Caco-2 (cell line): ENCODE measurements at regions of chr1 and their contacts with region 1.

Region 1: DNA sequence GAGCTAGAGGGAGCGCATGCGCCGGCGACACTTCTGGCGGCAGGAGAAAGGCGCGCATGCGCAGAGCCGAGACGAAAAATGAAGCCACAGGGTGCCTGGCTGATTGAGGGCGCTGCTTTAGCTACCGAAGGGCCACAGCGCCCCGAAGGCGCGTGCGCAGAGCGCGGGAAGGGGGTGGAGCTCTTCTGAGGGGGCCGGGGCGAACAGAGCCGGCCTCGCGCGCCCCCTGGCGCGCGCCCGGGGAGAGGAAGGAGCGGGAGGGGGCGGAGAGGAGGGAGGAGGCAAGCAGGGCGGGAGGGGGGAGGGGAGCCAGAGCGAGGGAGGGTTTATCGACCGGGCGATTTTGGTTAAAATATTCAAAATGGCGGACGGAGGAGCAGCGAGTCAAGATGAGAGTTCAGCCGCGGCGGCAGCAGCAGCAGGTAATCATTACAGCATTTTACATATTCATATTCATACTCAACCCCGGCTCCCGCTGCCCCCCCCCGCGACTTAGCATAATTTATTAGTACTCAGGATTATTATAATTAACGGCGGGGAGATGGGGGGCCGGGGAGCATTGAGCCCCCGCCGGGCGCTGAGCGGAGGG is at the start of gene POU2F1:
- DNase-seq: peak; percentile 97
- H3K4me3 ChIP-seq: peak within 1 kb of the TSS; percentile 85
- H3K4me3 Mint-ChIP-seq: peak within 1 kb of the TSS; percentile 83
- H3K27ac Mint-ChIP-seq: peak within 1 kb of the TSS; percentile 87
- H3K4me1 ChIP-seq: peaks cover 16% of the 10 kb centered on the region; the same call in 1 of the 2 replicates
- H3K4me1 Mint-ChIP-seq: peaks cover 14% of the 10 kb centered on the region
- H3K27me3 ChIP-seq: no peaks in the 10 kb centered on the region
- H3K27me3 Mint-ChIP-seq: no peaks in the 10 kb centered on the region
- CTCF ChIP-seq: peak; percentile 36 to 87
- total RNA-seq, gene POU2F1: 28.3 and 29.6 TPM in 2 replicates

Region 2: GRCh38 chr1:166910396-166910994 is 310.1 kb before region 1 on chr1:
- CTCF ChIA-PET with region 1: interaction called, 13 read pairs
- POLR2A ChIA-PET with region 1: no interaction called
- intact Hi-C with region 1: loop called (anchors 2 kb)
- DNase-seq: peak; percentile 77 to 79
- H3K4me3 ChIP-seq: no peak overlapping the region
- H3K4me3 Mint-ChIP-seq: no peak overlapping the region
- H3K27ac Mint-ChIP-seq: no peak overlapping the region
- H3K4me1 ChIP-seq: no peaks in the 10 kb centered on the region
- H3K4me1 Mint-ChIP-seq: no peaks in the 10 kb centered on the region
- H3K27me3 ChIP-seq: no peaks in the 10 kb centered on the region
- H3K27me3 Mint-ChIP-seq: peaks cover 10% of the 10 kb centered on the region
- CTCF ChIP-seq: peak; percentile 80 to 85

Region 3: GRCh38 chr1:167082511-167083027 is 138.1 kb before region 1 on chr1:
- CTCF ChIA-PET with region 1: interaction called, 7 read pairs
- POLR2A ChIA-PET with region 1: interaction called, 17 read pairs
- intact Hi-C with region 1: loop called (anchors 1 kb)
- DNase-seq: peak; percentile 66 to 88
- H3K4me3 ChIP-seq: no peak overlapping the region
- H3K4me3 Mint-ChIP-seq: no peak overlapping the region
- H3K27ac Mint-ChIP-seq: no peak overlapping the region
- H3K4me1 ChIP-seq: peaks cover 28% of the 10 kb centered on the region
- H3K4me1 Mint-ChIP-seq: no peaks in the 10 kb centered on the region
- H3K27me3 ChIP-seq: no peaks in the 10 kb centered on the region
- H3K27me3 Mint-ChIP-seq: no peaks in the 10 kb centered on the region
- CTCF ChIP-seq: no peak

Region 4: GRCh38 chr1:167165948-167166689 is 54.5 kb before region 1 on chr1:
- CTCF ChIA-PET with region 1: interaction called, 13 read pairs
- POLR2A ChIA-PET with region 1: interaction called, 8 read pairs
- intact Hi-C with region 1: loop called (anchors 1 kb)
- DNase-seq: peak; percentile 55 to 79
- H3K4me3 ChIP-seq: no peak overlapping the region
- H3K4me3 Mint-ChIP-seq: peak overlapping the region; percentile 5
- H3K27ac Mint-ChIP-seq: peak overlapping the region; percentile 26
- H3K4me1 ChIP-seq: peaks cover 22% of the 10 kb centered on the region
- H3K4me1 Mint-ChIP-seq: peaks cover 21% of the 10 kb centered on the region
- H3K27me3 ChIP-seq: no peaks in the 10 kb centered on the region
- H3K27me3 Mint-ChIP-seq: no peaks in the 10 kb centered on the region
- CTCF ChIP-seq: no peak

Region 5: GRCh38 chr1:167185974-167186657 is 34.5 kb before region 1 on chr1:
- CTCF ChIA-PET with region 1: no interaction called
- POLR2A ChIA-PET with region 1: no interaction called
- intact Hi-C with region 1: no loop called
- DNase-seq: no peak
- H3K4me3 ChIP-seq: no peak overlapping the region
- H3K4me3 Mint-ChIP-seq: no peak overlapping the region
- H3K27ac Mint-ChIP-seq: no peak overlapping the region
- H3K4me1 ChIP-seq: no peaks in the 10 kb centered on the region
- H3K4me1 Mint-ChIP-seq: no peaks in the 10 kb centered on the region
- H3K27me3 ChIP-seq: no peaks in the 10 kb centered on the region
- H3K27me3 Mint-ChIP-seq: no peaks in the 10 kb centered on the region
- CTCF ChIP-seq: no peak

Region 6: GRCh38 chr1:167297222-167298214 is 76.9 kb after region 1 on chr1:
- CTCF ChIA-PET with region 1: interaction called, 12 read pairs
- POLR2A ChIA-PET with region 1: interaction called, 10 read pairs
- intact Hi-C with region 1: no loop called
- DNase-seq: peak in 1 of 2 experiments; percentile 47
- H3K4me3 ChIP-seq: no peak overlapping the region
- H3K4me3 Mint-ChIP-seq: no peak overlapping the region
- H3K27ac Mint-ChIP-seq: no peak overlapping the region
- H3K4me1 ChIP-seq: peaks cover 15% of the 10 kb centered on the region
- H3K4me1 Mint-ChIP-seq: peaks cover 7% of the 10 kb centered on the region
- H3K27me3 ChIP-seq: no peaks in the 10 kb centered on the region
- H3K27me3 Mint-ChIP-seq: no peaks in the 10 kb centered on the region
- CTCF ChIP-seq: no peak

Region 7: DNA sequence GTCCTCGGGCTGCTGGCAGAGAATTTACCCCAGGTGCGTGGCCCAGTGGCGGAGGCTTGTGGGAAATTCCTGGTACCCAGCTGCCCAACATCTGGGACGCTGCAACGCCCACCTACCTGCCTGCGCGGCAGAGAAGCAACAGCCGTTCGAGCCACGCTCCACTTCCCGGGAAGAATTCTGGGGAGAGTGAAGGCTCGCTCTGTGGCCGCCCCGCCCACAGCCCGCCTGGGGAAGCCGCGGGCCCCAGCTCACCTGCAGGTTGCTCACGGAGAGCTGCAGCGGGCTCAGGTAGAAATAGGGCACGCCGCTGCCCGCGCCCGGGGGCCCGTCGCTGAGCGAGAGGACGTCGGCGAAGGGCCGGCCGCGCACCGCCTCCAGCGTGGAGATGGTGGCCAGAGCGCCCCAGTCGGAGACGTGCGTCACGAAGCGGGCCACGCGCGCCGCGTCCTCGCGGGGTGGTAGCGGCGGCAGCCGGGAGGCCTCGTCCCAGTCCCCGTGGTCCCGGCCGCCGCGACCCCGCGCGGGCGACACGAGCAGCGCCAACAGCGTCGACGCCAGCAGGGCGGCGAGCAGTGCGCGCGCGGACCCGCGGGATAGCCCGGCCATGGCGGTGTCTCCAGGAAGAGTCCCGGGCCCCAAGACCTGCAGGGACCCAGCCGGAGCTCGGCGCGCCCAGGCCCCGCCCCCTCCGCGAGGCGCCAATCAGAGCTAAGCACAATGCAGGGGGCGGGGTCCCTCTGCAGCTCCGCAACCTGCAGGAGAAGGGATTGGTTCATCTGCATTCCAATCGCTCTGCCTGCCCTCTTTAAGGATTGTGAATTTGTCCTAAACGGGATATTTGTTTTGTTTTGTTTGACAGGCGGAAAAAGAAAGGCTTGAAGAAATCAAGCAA is 332.8 kb after region 1 on chr1 and contains the start of gene CREG1:
- CTCF ChIA-PET with region 1: interaction called, 15 read pairs
- POLR2A ChIA-PET with region 1: interaction called, 29 read pairs
- intact Hi-C with region 1: no loop called
- DNase-seq: peak; percentile 95 to 98
- H3K4me3 ChIP-seq: peak within 1 kb of the TSS; percentile 65
- H3K4me3 Mint-ChIP-seq: peak within 1 kb of the TSS; percentile 82
- H3K27ac Mint-ChIP-seq: peak within 1 kb of the TSS; percentile 40
- H3K4me1 ChIP-seq: no peaks in the 10 kb centered on the region; the same call in 1 of the 2 replicates
- H3K4me1 Mint-ChIP-seq: no peaks in the 10 kb centered on the region
- H3K27me3 ChIP-seq: no peaks in the 10 kb centered on the region
- H3K27me3 Mint-ChIP-seq: no peaks in the 10 kb centered on the region
- CTCF ChIP-seq: no peak
- total RNA-seq, gene CREG1: 80.7 and 91.5 TPM in 2 replicates